Ascending aorta (tissue), 2 donors: ENCODE measurements at regions of chr12 and their contacts with region 1.

Region 1: GRCh38 chr12:76621582-76622024 is 62.0 kb upstream of the OSBPL8 start:
- DNase-seq: peak in 1 of 2 donors; percentile 82
- H3K4me3 ChIP-seq: no peak overlapping the region
- H3K27ac ChIP-seq: no peak overlapping the region
- H3K4me1 ChIP-seq: no peaks in the 10 kb centered on the region
- H3K27me3 ChIP-seq: no peaks in the 10 kb centered on the region
- CTCF ChIP-seq: peak; percentile 88 to 94 (median 92)

Region 2: GRCh38 chr12:76643438-76643837 is 21.8 kb after region 1 on chr12:
- intact Hi-C with region 1: no loop called
- DNase-seq: no peak
- H3K4me3 ChIP-seq: no peak overlapping the region
- H3K27ac ChIP-seq: no peak overlapping the region
- H3K4me1 ChIP-seq: no peaks in the 10 kb centered on the region
- H3K27me3 ChIP-seq: no peaks in the 10 kb centered on the region
- CTCF ChIP-seq: no peak

Region 3: GRCh38 chr12:76790564-76791552 is 169.3 kb after region 1 on chr12:
- intact Hi-C with region 1: loop called (anchors 1 kb)
- DNase-seq: no peak
- H3K4me3 ChIP-seq: no peak overlapping the region
- H3K27ac ChIP-seq: no peak overlapping the region
- H3K4me1 ChIP-seq: peaks cover 0 to 3% of the 10 kb centered on the region in 2 donors
- H3K27me3 ChIP-seq: no peaks in the 10 kb centered on the region
- CTCF ChIP-seq: peak; percentile 36 to 71 (median 54)

Region 4: GRCh38 chr12:76878899-76879709 is 257.5 kb after region 1 on chr12 and contains the start of gene CSRP2:
- intact Hi-C with region 1: loop called (anchors 1 kb)
- DNase-seq: peak; percentile 83 to 96
- H3K4me3 ChIP-seq: peak within 1 kb of the TSS; percentile 70 to 76
- H3K27ac ChIP-seq: peak within 1 kb of the TSS; percentile 94 to 98
- H3K4me1 ChIP-seq: peaks cover 0 to 33% of the 10 kb centered on the region in 2 donors
- H3K27me3 ChIP-seq: no peaks in the 10 kb centered on the region
- CTCF ChIP-seq: peak; percentile 18 to 36 (median 30)
- total RNA-seq, gene CSRP2: 59.7 TPM

Region 5: DNA sequence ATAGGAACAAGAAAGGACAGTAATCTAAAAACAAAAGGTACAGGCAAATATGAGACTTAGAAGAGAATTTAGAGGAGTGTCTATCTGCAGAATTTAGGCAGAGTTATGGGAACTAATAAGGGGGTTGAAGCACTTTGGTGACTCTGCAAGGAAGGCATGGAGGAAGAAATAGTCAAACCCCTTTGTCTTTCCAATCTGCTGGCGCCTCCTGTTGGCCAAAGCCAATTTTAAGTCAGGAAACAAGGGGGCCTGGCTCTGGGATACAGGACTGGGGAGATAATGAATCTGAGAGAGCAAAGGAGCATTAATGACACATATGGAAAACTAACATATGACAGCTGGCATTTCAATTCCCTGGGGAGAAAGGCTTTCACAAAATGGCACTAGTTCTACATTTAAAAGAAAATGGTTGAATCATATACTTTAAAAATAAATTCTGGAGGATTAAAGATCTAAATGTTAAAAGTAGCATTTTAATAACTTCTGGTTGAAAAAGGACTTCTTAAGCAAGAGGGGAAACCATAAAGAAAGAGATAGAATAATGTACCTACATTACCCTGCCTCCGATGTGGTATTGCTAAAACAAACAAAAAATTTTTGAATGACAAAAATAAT is 305.7 kb after region 1 on chr12:
- intact Hi-C with region 1: loop called (anchors 5 kb)
- DNase-seq: peak in 1 of 2 donors; percentile 68
- H3K4me3 ChIP-seq: no peak overlapping the region
- H3K27ac ChIP-seq: no peak overlapping the region
- H3K4me1 ChIP-seq: peaks cover 0 to 4% of the 10 kb centered on the region in 2 donors
- H3K27me3 ChIP-seq: no peaks in the 10 kb centered on the region
- CTCF ChIP-seq: peak in 2 of 3 experiments; percentile 31 to 51

Region 6: GRCh38 chr12:77010691-77011548 is 389.3 kb after region 1 on chr12:
- intact Hi-C with region 1: loop called (anchors 2 kb)
- DNase-seq: peak in 1 of 2 donors; percentile 81
- H3K4me3 ChIP-seq: peak overlapping the region in 1 of 2 donors; percentile 30
- H3K27ac ChIP-seq: no peak overlapping the region
- H3K4me1 ChIP-seq: no peaks in the 10 kb centered on the region
- H3K27me3 ChIP-seq: no peaks in the 10 kb centered on the region
- CTCF ChIP-seq: peak; percentile 43 to 96 (median 94)

Region 7: DNA sequence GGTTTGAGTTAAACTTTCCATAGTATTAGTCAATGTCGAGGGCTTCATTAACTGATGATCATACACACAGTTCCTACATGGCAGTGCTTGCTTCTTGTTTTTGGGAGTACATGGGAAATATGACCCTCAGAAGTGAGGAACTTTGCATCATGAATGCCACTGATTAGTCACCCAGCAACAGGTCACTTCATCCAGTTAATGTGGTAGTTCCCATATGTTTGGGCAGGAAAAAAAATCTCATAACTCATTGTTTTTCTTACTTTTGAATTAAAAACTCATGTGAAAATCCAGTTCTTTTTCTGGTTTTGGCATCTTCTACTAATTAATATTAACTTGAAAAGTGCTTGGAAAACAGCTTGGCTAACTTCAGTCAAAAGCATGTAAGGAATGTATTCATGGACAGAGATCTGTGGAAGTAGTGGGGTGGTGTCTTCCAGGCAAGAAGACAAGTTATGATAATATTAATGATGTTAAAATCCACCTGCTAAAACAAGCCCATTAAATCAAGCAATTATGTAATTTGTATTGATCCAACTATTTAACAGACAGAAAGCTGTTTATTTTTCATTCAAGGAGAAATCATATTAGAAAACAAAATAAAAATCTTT is 900.0 kb after region 1 on chr12:
- intact Hi-C with region 1: no loop called
- DNase-seq: no peak
- H3K4me3 ChIP-seq: no peak overlapping the region
- H3K27ac ChIP-seq: no peak overlapping the region
- H3K4me1 ChIP-seq: no peaks in the 10 kb centered on the region
- H3K27me3 ChIP-seq: no peaks in the 10 kb centered on the region
- CTCF ChIP-seq: no peak